AG04449 (cell line): ENCODE measurements at regions of chr3 and their contacts with region 1.

Region 1: DNA sequence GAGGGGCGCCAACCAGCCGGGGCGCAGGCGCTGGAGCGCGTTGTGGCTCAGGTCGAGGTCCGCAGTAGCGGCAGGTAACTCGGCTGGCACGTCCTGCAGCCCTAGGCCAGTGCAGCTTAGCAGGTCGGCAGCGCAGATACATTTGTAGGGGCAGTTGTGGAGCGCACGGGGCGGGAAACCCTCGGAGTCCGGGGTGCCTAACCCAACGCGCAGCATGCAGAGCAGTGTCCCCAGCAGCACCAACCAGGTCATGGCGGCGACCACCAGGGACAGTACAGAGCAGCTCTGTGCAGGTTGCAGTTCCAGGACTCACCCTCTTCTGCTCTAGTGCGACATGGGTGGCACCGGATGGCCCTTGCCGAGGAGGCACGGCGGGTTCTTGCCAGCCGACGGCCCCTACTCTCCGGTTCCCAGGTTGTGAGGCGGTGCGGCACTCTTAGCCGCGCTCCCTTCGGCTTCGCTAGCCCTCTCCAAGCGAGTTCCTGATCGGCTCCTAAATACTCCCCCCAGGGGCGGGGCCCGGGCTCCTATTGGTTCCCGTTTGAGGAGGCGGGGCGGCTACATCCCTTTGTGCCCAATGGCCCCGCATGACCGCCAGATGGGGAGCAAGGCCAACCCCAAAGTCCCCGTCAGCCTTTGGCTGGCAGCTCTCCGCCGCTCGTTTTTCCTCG is at the start of gene AMIGO3:
- DNase-seq: peak; percentile 42
- H3K4me3 ChIP-seq: peak within 1 kb of the TSS; percentile 62
- CTCF ChIP-seq: peak; percentile 82

Region 2: GRCh38 chr3:49689046-49689907 is 30.1 kb before region 1 on chr3 and contains the starts of genes MST1 and RNF123:
- CTCF ChIA-PET with region 1: no interaction called
- POLR2A ChIA-PET with region 1: no interaction called
- DNase-seq: peak; percentile 28
- H3K4me3 ChIP-seq: peak within 1 kb of the TSS; percentile 95
- CTCF ChIP-seq: peak; percentile 60

Region 3: DNA sequence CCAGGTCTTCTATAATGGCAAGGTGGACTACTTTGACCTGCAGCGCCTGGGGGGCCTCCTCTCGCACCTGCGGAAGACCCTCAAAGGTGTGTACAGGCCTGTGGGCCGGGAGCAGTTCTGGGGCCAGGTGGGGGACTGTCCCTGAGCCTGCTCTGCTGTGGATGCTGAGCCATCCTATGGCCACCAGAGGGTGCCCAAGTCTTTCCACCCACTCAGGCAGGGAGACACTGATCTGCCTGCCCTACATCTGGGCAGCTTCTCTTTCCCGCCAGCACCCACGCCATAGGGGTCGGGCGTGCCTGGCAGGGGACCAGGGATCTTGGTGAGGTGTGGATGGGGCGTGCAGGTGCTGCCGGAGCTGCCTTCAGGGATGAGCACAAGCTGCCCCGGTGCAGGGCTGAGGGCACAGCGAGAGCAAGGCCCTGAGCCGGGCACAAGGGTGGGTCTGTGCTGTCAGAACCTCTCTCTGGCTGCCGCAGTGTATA is 15.9 kb before region 1 on chr3:
- CTCF ChIA-PET with region 1: interaction called, 51 read pairs
- POLR2A ChIA-PET with region 1: no interaction called
- DNase-seq: no peak
- H3K4me3 ChIP-seq: no peak overlapping the region
- CTCF ChIP-seq: peak; percentile 90